ENCODE measurements at regions of chr1 and their contacts with region 1.

Region 1: DNA sequence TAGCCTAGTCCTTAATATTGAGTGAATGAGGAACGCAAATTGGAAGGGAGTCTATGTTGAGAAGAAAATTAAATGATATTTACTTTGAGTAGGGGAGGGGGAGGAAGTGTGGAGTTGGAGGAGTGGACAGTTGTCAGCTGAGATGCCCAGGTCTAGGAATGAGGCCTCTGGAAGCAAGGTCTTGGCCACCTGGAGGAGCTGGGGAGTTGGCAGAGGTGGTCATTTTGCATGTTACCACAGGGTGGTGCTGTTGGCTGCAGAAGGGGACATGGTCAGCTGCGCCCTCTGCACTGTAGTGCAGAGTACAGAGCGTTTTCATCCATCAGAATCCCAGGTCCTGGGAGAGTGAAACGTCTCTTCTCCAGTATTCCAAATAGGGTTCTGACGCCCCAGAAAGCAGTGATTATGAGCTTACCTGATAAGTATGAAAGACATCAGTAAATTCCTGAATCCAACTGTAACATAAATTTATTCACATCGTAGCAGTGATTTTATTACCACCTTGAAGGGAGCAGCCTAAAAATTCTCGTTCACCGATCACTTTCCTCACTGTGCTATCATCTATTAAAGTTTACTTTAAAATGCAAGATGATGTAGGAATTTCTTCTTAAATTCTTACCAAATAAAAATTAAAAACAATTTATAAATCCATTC is 13.8 kb downstream of the PARK7 start:
- DNase-seq: peak; percentile 75
- ATAC-seq: peak; percentile 97
- H3K4me3 ChIP-seq: no peak overlapping the region
- H3K27ac ChIP-seq: no peak overlapping the region
- H3K4me1 ChIP-seq: no peaks in the 10 kb centered on the region; the same call in 1 of the 2 replicates
- H3K27me3 ChIP-seq: no peaks in the 10 kb centered on the region
- CTCF ChIP-seq: peak; percentile 98
- POLR2A ChIP-seq: no peak
- RAD21 ChIP-seq: peak; percentile 97

Region 2: DNA sequence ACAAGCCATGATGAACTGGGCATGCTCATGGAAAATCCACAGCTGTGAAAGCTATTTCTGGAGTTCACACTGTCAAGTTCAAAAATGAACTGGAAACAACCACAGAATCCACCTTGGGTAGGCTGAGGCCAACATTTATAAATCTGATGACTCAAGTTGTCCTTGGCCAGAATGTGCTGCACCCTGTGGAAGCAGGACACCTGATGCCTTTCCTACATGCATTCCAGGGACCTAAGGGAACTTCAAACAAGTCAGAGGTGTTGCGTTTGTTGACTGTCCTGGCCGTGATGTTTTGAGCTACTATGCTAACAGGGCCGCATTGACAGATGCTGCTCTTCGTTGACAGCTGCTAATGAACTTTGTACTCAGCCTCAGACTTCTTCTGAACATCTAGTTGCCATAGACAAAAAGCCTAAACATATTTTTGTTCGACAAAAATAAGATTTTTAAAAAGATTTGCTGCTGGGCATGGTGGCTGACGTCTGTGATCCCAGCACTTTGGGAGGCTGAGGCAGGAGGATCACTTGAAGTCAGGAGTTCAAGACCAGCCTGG is 214.7 kb after region 1 on chr1:
- CTCF ChIA-PET with region 1: no interaction called
- POLR2A ChIA-PET with region 1: no interaction called
- dilution Hi-C with region 1: no loop called
- in situ Hi-C with region 1: no loop called
- intact Hi-C with region 1: no loop called
- DNase-seq: peak; percentile 67
- ATAC-seq: no peak
- H3K4me3 ChIP-seq: no peak overlapping the region
- H3K27ac ChIP-seq: no peak overlapping the region
- H3K4me1 ChIP-seq: peaks cover 7% of the 10 kb centered on the region
- H3K27me3 ChIP-seq: no peaks in the 10 kb centered on the region
- CTCF ChIP-seq: no peak
- POLR2A ChIP-seq: no peak
- RAD21 ChIP-seq: no peak

Region 3: DNA sequence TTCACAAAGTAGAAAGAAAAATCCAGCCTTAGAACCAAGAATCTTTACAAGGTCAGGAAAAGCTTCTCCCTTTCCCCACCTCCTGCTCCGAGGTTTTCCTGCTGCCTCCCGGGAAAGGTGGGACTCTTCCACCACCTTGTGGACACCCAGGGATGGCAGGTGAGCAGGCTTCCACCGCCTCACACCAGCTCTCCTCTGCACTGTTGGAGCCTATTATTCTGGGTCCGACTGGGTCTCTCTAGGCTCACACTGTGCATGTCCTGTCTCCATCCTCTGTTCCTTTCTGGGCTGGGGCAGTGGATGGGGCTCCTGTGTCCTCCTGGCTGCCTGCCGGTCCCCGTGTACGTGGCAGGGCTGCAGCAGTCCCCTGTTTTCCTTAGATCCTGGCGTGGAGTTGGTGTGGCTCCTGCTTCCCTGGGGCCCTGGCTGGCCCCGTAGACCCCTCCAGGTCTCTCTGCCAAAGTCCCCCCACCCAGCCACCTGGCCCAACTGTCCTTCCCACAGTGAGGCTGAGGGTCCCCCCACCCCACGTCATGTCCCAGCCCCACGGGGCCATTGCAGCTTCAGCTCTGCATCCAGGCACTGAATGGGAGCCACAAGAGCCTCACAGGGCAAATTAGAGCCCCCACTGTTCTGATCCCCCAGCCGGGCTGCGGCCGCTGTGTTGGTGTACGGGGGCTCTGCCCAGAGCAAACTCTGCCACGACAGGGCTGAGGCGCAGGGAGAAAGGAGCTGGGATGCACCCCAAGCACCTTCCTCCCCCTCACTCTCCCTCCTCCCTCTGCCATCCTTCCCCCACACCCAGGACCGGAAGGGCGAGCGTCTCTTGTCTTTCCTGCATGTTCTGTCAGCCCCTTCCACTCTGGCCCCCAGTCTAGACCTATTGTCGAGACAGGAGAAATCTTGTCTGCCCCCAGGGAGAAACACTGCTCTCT is 339.3 kb after region 1 on chr1:
- CTCF ChIA-PET with region 1: interaction called, 21 read pairs
- POLR2A ChIA-PET with region 1: no interaction called
- dilution Hi-C with region 1: no loop called
- in situ Hi-C with region 1: loop called (anchors 5 kb)
- intact Hi-C with region 1: loop called (anchors 2 kb)
- DNase-seq: peak; percentile 77
- ATAC-seq: peak; percentile 86
- H3K4me3 ChIP-seq: no peak overlapping the region
- H3K27ac ChIP-seq: no peak overlapping the region; the same call in 1 of the 2 replicates
- H3K4me1 ChIP-seq: peaks cover 10% of the 10 kb centered on the region
- H3K27me3 ChIP-seq: no peaks in the 10 kb centered on the region
- CTCF ChIP-seq: peak; percentile 98
- POLR2A ChIP-seq: peak; percentile 70
- RAD21 ChIP-seq: peak; percentile 100

Region 4: GRCh38 chr1:8423650-8424538 is 448.6 kb after region 1 on chr1:
- CTCF ChIA-PET with region 1: no interaction called
- POLR2A ChIA-PET with region 1: no interaction called
- dilution Hi-C with region 1: no loop called
- in situ Hi-C with region 1: no loop called
- intact Hi-C with region 1: loop called (anchors 5 kb)
- DNase-seq: peak; percentile 65
- ATAC-seq: peak; percentile 66
- H3K4me3 ChIP-seq: peak overlapping the region; percentile 73
- H3K27ac ChIP-seq: peak overlapping the region; percentile 99
- H3K4me1 ChIP-seq: peaks cover 15% of the 10 kb centered on the region
- H3K27me3 ChIP-seq: no peaks in the 10 kb centered on the region
- CTCF ChIP-seq: no peak
- POLR2A ChIP-seq: peak; percentile 56; the same call in 1 of the 2 replicates
- RAD21 ChIP-seq: no peak; the same call in 1 of the 2 replicates

Region 5: DNA sequence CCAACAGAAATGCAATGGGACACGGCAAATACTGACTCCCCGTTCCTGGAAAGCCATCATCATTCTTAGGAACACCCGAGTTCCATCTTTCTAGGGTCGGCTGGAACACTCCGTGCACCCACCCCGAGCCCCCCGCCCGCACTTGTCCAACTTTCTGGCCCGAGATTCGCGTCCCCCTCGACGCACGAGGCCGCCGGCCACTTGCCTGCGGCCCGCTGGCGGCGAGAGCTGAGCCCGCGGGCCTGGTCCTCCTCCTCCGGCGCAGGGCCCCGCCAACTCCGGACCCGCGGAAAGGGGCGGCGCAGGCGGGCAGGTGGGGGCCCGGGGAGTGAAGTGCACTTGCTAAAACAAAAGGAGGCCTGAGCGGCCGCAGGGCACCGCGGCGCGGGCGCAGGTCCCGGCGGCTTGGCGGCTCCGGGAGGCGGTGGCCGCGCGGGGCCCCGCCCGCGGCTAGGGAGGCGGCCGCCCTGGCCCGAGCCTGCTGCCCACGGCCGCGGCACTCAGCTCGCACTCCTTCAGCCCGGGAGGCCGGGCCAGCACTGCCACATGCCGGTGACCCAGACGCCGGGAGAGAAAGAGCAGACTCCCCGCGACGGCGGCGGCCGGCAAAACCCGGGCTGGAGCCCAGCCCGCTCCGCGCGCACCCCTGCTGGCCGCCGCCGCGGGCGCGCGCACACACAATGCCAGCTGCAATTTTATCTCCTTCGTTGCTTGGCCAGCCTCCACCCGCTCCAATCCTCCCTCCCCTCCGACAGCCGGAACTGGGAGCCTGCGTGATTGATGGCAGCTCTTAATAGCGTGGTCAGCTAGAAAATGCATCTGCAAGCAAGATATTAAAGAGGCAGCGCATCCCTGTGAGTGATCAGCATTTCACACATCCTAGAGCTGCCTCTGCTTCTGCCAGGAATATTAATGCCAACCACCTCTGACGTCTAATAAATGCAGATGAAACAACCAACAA is 727.8 kb after region 1 on chr1:
- CTCF ChIA-PET with region 1: no interaction called
- POLR2A ChIA-PET with region 1: no interaction called
- dilution Hi-C with region 1: no loop called
- in situ Hi-C with region 1: loop called (anchors 25 kb)
- intact Hi-C with region 1: no loop called
- DNase-seq: peak; percentile 89
- ATAC-seq: peak; percentile 84
- H3K4me3 ChIP-seq: peak overlapping the region; percentile 93
- H3K27ac ChIP-seq: peak overlapping the region; percentile 94
- H3K4me1 ChIP-seq: peaks cover 10% of the 10 kb centered on the region
- H3K27me3 ChIP-seq: no peaks in the 10 kb centered on the region
- CTCF ChIP-seq: peak; percentile 35
- POLR2A ChIP-seq: peak; percentile 91
- RAD21 ChIP-seq: peak; percentile 39